Colonic mucosa (tissue), 4 donors: ENCODE measurements at regions of chr5 and their contacts with region 1.

Region 1: DNA sequence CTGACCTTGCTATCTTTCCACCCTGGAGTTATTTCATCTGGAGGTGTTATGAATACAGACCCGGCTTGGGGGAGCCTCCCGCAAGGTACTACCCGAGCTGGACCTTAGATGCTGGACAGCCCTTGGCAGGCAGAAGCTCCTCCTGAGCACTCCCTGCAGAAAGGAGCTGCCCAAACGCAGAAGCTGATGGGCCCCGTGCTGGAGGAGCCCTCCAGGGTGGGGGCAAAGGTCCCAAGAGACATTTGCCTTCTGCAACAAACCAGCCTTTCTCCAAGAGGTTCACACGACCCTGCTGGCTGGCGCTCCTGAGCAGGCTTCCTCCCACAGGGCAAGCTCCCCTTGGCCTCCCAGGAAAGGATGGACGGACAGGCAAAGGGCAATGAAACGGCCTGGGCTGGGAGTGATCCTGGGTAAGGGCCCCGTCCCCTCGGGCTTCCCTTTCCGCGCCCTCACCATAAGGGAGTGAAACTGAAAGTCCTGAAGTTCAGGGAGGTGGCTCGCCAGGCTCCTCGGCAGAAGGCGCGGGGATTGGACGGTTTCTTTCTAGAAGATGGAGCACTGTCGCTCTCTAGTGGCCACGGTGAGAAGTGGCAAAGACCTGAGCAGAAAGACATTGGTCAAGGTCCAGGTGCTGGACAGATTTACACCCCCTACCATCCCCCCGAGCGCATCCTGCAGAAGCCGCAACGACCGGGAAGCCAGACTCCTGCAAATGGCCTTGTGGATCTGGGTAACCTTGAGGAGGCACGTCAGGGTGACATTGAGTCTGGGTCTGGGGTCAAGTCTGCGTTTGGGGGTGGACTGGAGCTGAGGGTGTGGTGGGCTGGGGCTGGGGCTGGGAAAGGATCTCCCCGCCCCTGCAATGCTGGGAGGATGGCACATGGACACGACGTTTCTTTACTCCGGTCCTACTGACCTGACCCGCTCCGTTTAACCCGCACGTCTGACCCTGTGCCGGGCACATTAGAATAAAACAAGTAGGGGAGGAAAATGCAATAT is 56.4 kb downstream of the NEURL1B start:
- DNase-seq: peak; percentile 95
- H3K4me3 ChIP-seq: peak overlapping the region; percentile 53
- H3K27ac ChIP-seq: peak overlapping the region; percentile 65
- H3K4me1 ChIP-seq: no peaks in the 10 kb centered on the region
- H3K27me3 ChIP-seq: no peaks in the 10 kb centered on the region
- CTCF ChIP-seq: peak; percentile 87

Region 2: GRCh38 chr5:172479044-172479783 is 218.2 kb before region 1 on chr5:
- intact Hi-C with region 1: loop called (anchors 1 kb)
- DNase-seq: peak; percentile 89
- H3K4me3 ChIP-seq: no peak overlapping the region
- H3K27ac ChIP-seq: no peak overlapping the region
- H3K4me1 ChIP-seq: no peaks in the 10 kb centered on the region
- H3K27me3 ChIP-seq: no peaks in the 10 kb centered on the region
- CTCF ChIP-seq: peak; percentile 78

Region 3: DNA sequence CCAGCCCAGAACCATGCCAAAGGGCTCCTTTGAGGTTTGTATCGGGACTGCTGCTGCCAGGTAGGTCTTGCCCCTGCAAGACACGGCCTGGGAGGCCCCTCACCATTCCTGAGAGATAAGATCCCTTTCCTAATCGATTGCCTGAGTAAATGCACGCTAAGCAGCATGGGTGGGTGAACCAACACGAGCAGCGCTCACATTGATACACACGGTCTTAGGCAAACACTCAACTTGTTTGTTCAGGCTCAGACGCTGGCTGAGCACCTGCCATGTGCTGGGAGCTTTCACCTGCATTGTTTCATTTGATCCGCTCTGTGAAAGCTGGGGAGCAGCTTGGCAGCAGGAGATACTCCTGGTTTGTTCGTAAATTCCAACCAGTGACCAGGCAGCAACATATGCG is 133.2 kb before region 1 on chr5:
- intact Hi-C with region 1: loop called (anchors 10 kb)
- DNase-seq: peak; percentile 50
- H3K4me3 ChIP-seq: no peak overlapping the region
- H3K27ac ChIP-seq: no peak overlapping the region
- H3K4me1 ChIP-seq: no peaks in the 10 kb centered on the region
- H3K27me3 ChIP-seq: no peaks in the 10 kb centered on the region
- CTCF ChIP-seq: no peak

Region 4: DNA sequence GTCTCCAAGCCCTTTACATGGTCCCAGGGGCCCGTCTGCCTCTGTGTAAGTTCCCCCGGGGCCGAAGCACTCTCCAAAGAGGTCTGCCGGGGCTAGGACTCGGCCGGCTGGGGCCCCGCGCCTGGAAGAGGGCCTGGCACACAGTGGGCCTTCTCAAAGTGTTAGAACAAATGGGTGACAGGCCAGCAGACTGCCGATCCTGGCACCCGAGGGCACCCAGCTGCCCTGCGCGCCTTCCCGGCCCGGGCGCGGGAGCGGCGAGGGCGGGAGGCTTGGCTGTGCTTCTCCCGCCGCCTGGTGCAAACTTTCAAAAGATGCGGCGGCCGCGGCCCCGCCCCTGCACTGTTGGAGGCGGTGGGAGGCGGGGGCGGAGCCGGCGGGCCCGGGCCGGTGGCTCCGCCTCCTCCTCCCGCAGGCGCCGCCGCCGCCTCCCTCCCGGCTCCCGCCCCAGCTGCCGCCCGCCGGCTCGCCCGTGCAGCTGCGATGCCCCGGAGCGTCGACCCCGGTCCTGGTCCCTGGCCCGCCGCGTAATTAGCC is 56.5 kb before region 1 on chr5 and contains the start of gene NEURL1B:
- intact Hi-C with region 1: loop called (anchors 5 kb)
- DNase-seq: peak; percentile 88
- H3K4me3 ChIP-seq: peak within 1 kb of the TSS; percentile 88
- H3K27ac ChIP-seq: peak within 1 kb of the TSS; percentile 80
- H3K4me1 ChIP-seq: peaks cover 4% of the 10 kb centered on the region
- H3K27me3 ChIP-seq: no peaks in the 10 kb centered on the region
- CTCF ChIP-seq: no peak
- total RNA-seq, gene NEURL1B: 61.6 to 99.9 TPM